WTC11 (cell line): ENCODE measurements at regions of chr5 and their contacts with region 1.

Region 1: GRCh38 chr5:179316186-179316820 is 29.0 kb downstream of the ADAMTS2 start:
- DNase-seq: peak; percentile 5
- ATAC-seq: no peak
- H3K4me3 Mint-ChIP-seq: no peak overlapping the region
- H3K27ac Mint-ChIP-seq: no peak overlapping the region
- H3K4me1 Mint-ChIP-seq: 0 out of 2 replicates have a peak, but pooled peaks cover 6% of the 10 kb centered on the region
- H3K27me3 Mint-ChIP-seq: no peaks in the 10 kb centered on the region
- CTCF ChIP-seq: no peak

Region 2: DNA sequence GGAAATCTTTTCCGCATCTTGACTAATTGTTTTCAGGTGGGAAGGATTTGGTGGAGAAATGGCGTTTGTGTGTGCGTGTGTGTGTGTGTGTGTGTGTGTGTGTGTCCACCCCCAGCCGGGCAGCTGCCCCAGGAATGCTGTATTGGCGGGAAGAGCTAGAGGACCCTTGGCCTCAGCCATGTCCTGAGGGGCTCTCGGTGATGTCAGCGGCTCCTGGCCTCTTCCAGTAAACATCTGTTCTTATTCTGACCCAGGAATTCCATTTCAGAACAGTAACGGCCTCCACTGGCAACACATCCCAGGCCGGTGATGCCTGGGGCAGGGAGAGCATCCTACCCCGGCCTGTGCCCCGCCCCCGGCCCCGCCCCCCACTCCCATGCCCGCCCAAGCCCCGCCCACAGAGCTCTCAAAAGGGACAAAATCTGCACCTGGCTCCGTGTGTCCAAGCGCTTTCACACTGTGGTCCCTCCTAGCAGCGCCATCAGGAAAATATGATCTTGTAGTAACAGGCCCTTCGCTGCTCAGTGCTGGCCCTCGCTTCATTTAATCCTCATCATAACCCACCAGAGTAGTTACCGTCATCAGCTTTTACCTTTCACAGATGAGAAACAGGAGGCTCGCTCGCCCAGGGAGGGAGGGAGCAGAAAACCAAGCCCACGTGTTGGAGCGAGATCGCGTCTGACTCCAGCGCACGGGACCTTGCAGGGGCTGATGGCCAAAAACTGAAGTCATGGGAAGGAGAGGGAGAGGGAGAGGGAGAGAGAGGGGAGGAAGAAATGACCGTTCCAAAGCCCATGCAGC is 10.0 kb after region 1 on chr5:
- CTCF ChIA-PET with region 1: interaction called, 10 read pairs
- POLR2A ChIA-PET with region 1: no interaction called
- DNase-seq: peak; percentile 49
- ATAC-seq: peak; percentile 75
- H3K4me3 Mint-ChIP-seq: peak overlapping the region; percentile 69
- H3K27ac Mint-ChIP-seq: peak overlapping the region; percentile 23; the same call in 1 of the 2 replicates
- H3K4me1 Mint-ChIP-seq: peaks cover 18% of the 10 kb centered on the region
- H3K27me3 Mint-ChIP-seq: peaks cover 18% of the 10 kb centered on the region
- CTCF ChIP-seq: no peak